ENCODE measurements at regions of chr4 and their contacts with region 1.

Region 1: DNA sequence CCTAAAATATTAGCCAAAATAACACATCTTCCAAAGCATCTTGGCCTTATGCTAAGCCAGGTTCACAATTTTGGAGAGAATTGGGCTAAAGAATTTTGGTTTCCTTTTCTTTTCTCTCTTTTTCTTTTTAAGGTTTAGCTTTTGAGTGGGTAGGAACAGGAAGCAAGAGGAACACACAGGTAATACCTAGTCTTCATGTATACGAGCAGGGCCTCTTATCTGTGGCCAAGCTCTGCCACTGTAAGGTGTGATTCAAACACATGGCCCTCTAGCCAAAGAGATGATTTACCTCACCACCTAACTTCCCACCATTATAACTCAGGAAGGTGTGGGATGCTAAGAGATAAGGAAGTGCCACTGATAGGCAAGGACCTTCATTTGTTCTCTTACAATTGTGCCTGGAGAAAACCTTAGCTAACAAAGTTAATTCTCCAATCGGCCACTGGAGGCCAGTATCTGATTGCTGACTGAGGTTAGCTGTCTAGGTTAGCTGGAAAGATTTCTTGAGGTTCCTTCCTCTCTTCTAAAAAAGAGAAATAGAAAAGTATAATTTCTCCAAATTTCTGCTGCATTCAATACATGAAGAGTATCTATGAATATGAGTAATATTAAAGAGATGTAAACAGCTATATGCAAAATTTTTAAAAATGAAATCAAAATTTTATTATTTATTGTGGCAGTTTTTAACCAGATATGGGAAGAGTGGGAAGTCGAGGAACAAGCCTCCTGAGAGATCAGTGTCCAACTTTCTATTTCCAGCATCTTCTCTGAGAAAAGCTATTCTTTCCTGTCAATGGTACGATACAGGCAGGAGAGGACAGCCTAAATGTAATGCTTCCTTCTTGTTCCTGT is 30.1 kb upstream of the BBS7 start:
- H3K4me3 ChIP-seq: no peak overlapping the region
- H3K27ac ChIP-seq: no peak overlapping the region
- H3K4me1 ChIP-seq: no peaks in the 10 kb centered on the region
- CTCF ChIP-seq: peak; percentile 52

Region 2: GRCh38 chr4:121879135-121879534 is 21.2 kb before region 1 on chr4:
- CTCF ChIA-PET with region 1: no interaction called
- POLR2A ChIA-PET with region 1: no interaction called
- H3K4me3 ChIP-seq: no peak overlapping the region
- H3K27ac ChIP-seq: no peak overlapping the region
- H3K4me1 ChIP-seq: no peaks in the 10 kb centered on the region
- CTCF ChIP-seq: no peak

Region 3: DNA sequence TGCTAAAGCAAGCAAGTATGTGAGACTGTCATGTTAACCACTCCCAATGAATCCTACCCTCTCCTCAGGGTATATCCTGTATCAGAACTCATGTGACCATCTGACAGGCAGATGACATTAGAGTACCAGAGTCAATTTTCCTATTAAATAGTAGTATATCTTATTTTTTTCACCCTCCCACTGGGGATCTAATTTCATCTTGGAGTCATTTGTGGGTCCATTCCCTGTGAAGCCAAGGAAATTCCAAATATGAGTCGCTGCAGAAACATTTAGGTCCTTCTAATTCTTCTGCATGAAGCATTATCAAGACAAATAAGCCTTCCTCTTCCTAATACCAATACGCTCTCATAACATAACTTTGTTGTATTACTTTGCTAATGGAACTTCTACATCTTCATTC is 199.5 kb after region 1 on chr4:
- CTCF ChIA-PET with region 1: no interaction called
- POLR2A ChIA-PET with region 1: no interaction called
- H3K4me3 ChIP-seq: no peak overlapping the region
- H3K27ac ChIP-seq: no peak overlapping the region
- H3K4me1 ChIP-seq: no peaks in the 10 kb centered on the region
- CTCF ChIP-seq: no peak

Region 4: GRCh38 chr4:122224348-122224747 is 324.0 kb after region 1 on chr4:
- CTCF ChIA-PET with region 1: interaction called, 10 read pairs
- POLR2A ChIA-PET with region 1: no interaction called
- H3K4me3 ChIP-seq: no peak overlapping the region
- H3K27ac ChIP-seq: no peak overlapping the region
- H3K4me1 ChIP-seq: no peaks in the 10 kb centered on the region
- CTCF ChIP-seq: no peak

Region 5: DNA sequence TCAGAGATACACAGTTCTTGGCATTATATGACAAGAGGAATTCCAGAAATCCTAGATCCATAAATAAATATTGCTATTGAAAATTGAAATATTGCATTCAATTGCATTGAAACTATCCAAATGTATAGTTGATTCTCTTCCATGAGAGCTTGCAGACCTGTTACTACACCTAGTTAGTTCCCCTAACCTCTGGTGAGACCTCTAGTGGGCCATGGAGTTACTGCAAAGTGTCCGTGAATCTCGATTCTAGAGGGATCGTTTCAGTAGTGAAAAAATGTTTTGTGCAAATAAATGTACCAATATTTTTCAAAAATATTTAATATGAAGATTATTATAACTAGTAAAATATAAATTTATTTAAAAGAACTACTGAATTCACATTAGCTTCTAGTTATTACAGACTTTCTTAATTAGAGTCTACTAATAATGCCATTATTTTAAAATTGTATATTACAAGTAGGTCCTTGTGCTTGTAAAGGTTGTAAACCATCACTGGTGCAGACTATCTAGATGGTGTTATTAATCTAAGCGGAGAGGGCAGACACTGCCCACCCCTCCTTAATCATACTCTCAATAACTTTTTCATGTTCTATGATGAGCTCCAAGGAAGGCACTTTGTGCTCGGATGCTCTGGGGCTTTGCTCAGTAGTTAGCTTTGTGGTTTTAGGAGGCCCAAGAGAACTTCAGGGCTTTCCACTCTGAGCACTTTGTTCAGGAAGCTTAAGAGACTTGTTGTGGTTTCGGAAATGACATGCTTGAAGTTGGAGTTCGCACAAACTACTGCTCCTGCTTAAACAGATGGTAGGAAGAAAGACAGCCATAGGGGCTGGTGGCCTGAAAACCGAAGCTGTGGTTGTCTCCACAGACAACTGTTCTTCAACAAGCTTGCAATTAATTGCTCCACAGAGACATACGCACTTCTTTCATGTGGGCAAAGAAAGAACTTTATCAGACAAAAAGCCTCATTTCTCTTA is 677.7 kb after region 1 on chr4:
- CTCF ChIA-PET with region 1: interaction called, 24 read pairs
- POLR2A ChIA-PET with region 1: no interaction called
- H3K4me3 ChIP-seq: no peak overlapping the region
- H3K27ac ChIP-seq: no peak overlapping the region
- H3K4me1 ChIP-seq: no peaks in the 10 kb centered on the region
- CTCF ChIP-seq: no peak

Measured in HEK293 (cell line).